IMR-90 (cell line): ENCODE measurements at regions of chr12 and their contacts with region 1.

Region 1: GRCh38 chr12:108856428-108857157 is 790 bp downstream of the SSH1 start:
- DNase-seq: peak; percentile 87
- ATAC-seq: peak; percentile 12
- H3K4me3 ChIP-seq: peak overlapping the region; percentile 93
- H3K27ac ChIP-seq: peak overlapping the region; percentile 100
- H3K4me1 ChIP-seq: peaks cover 28% of the 10 kb centered on the region
- H3K27me3 ChIP-seq: no peaks in the 10 kb centered on the region
- CTCF ChIP-seq: no peak
- POLR2A ChIP-seq: peak; percentile 97
- RAD21 ChIP-seq: no peak

Region 2: GRCh38 chr12:108371801-108372344 is 484.7 kb before region 1 on chr12:
- CTCF ChIA-PET with region 1: no interaction called
- POLR2A ChIA-PET with region 1: no interaction called
- dilution Hi-C with region 1: no loop called
- in situ Hi-C with region 1: no loop called
- intact Hi-C with region 1: no loop called
- DNase-seq: peak; percentile 47
- ATAC-seq: peak; percentile 44; the same call in 1 of the 2 replicates
- H3K4me3 ChIP-seq: no peak overlapping the region
- H3K27ac ChIP-seq: no peak overlapping the region
- H3K4me1 ChIP-seq: no peaks in the 10 kb centered on the region
- H3K27me3 ChIP-seq: no peaks in the 10 kb centered on the region
- CTCF ChIP-seq: no peak
- POLR2A ChIP-seq: no peak
- RAD21 ChIP-seq: no peak

Region 3: DNA sequence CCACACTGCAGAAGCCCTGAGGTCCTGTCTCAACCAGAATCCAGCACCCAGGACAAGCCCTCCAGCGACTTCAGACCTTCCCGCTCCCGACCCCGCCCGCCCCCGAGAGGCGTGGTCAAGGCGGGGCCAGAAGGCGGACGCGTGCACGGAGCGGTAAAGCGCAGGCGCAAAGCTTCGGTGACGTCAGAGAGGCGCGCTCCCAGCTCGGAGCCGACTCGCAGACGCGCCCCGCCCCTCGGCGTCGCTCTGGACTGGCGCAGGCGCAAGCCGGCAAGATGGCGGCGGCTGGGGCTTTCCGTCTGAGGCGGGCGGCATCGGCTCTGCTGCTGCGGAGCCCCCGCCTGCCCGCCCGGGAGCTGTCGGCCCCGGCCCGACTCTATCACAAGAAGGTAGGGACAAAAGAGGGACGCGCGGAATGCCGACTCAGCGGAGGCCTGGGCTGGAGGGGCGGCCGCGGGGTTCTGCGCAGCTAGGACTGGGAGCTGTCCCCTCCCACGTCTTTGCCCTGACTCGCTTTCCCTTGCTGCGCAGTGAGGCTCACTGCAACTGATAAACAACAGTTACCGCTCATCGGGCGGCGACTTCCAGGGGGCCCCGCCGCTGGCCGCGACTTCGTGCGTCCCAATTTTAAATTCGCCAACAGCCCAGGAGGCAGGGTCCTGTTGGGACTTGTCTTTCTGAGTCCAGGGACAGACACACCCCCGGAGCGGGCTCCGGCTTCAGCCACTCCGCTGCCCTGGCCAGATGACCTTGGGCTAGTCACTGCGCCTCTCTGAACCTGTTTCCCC is 294.1 kb before region 1 on chr12 and contains the start of gene ISCU:
- CTCF ChIA-PET with region 1: no interaction called
- POLR2A ChIA-PET with region 1: no interaction called
- dilution Hi-C with region 1: no loop called
- in situ Hi-C with region 1: no loop called
- intact Hi-C with region 1: loop called (anchors 2 kb)
- DNase-seq: peak; percentile 95
- ATAC-seq: peak; percentile 86
- H3K4me3 ChIP-seq: peak within 1 kb of the TSS; percentile 92
- H3K27ac ChIP-seq: peak within 1 kb of the TSS; percentile 89
- H3K4me1 ChIP-seq: no peaks in the 10 kb centered on the region
- H3K27me3 ChIP-seq: no peaks in the 10 kb centered on the region
- CTCF ChIP-seq: no peak
- POLR2A ChIP-seq: peak; percentile 88
- RAD21 ChIP-seq: no peak
- total RNA-seq, gene ISCU: 52.7 and 58.3 TPM in 2 replicates

Region 4: GRCh38 chr12:108664338-108665258 is 192.0 kb before region 1 on chr12:
- CTCF ChIA-PET with region 1: interaction called, 3 read pairs
- POLR2A ChIA-PET with region 1: no interaction called
- dilution Hi-C with region 1: no loop called
- in situ Hi-C with region 1: no loop called
- intact Hi-C with region 1: loop called (anchors 1 kb)
- DNase-seq: peak; percentile 95
- ATAC-seq: peak; percentile 92
- H3K4me3 ChIP-seq: no peak overlapping the region
- H3K27ac ChIP-seq: peak overlapping the region; percentile 85
- H3K4me1 ChIP-seq: peaks cover 30% of the 10 kb centered on the region
- H3K27me3 ChIP-seq: no peaks in the 10 kb centered on the region
- CTCF ChIP-seq: peak; percentile 98
- POLR2A ChIP-seq: peak; percentile 31; the same call in 1 of the 2 replicates
- RAD21 ChIP-seq: peak; percentile 99

Region 5: GRCh38 chr12:108722992-108723766 is 133.4 kb before region 1 on chr12:
- CTCF ChIA-PET with region 1: no interaction called
- POLR2A ChIA-PET with region 1: interaction called, 4 read pairs
- dilution Hi-C with region 1: no loop called
- in situ Hi-C with region 1: loop called (anchors 10 kb)
- intact Hi-C with region 1: loop called (anchors 2 kb)
- DNase-seq: peak; percentile 95
- ATAC-seq: peak; percentile 61
- H3K4me3 ChIP-seq: peak overlapping the region; percentile 2; the same call in 1 of the 2 replicates
- H3K27ac ChIP-seq: peak overlapping the region; percentile 98
- H3K4me1 ChIP-seq: peaks cover 36% of the 10 kb centered on the region
- H3K27me3 ChIP-seq: no peaks in the 10 kb centered on the region
- CTCF ChIP-seq: no peak
- POLR2A ChIP-seq: peak; percentile 54; the same call in 1 of the 2 replicates
- RAD21 ChIP-seq: no peak

Region 6: GRCh38 chr12:108793756-108794441 is 62.7 kb before region 1 on chr12:
- CTCF ChIA-PET with region 1: no interaction called
- POLR2A ChIA-PET with region 1: no interaction called
- dilution Hi-C with region 1: no loop called
- in situ Hi-C with region 1: no loop called
- intact Hi-C with region 1: no loop called
- DNase-seq: no peak
- ATAC-seq: peak; percentile 7; the same call in 1 of the 2 replicates
- H3K4me3 ChIP-seq: no peak overlapping the region
- H3K27ac ChIP-seq: peak overlapping the region; percentile 4; the same call in 1 of the 2 replicates
- H3K4me1 ChIP-seq: peaks cover 13% of the 10 kb centered on the region
- H3K27me3 ChIP-seq: no peaks in the 10 kb centered on the region
- CTCF ChIP-seq: no peak
- POLR2A ChIP-seq: no peak
- RAD21 ChIP-seq: no peak

Region 7: GRCh38 chr12:108833355-108833733 is 23.2 kb before region 1 on chr12:
- CTCF ChIA-PET with region 1: interaction called, 13 read pairs
- POLR2A ChIA-PET with region 1: interaction called, 7 read pairs
- dilution Hi-C with region 1: no loop called
- in situ Hi-C with region 1: no loop called
- intact Hi-C with region 1: loop called (anchors 1 kb)
- DNase-seq: peak; percentile 90
- ATAC-seq: peak; percentile 67
- H3K4me3 ChIP-seq: no peak overlapping the region
- H3K27ac ChIP-seq: peak overlapping the region; percentile 98
- H3K4me1 ChIP-seq: peaks cover 44% of the 10 kb centered on the region
- H3K27me3 ChIP-seq: no peaks in the 10 kb centered on the region
- CTCF ChIP-seq: no peak
- POLR2A ChIP-seq: peak; percentile 60
- RAD21 ChIP-seq: no peak

Region 8: DNA sequence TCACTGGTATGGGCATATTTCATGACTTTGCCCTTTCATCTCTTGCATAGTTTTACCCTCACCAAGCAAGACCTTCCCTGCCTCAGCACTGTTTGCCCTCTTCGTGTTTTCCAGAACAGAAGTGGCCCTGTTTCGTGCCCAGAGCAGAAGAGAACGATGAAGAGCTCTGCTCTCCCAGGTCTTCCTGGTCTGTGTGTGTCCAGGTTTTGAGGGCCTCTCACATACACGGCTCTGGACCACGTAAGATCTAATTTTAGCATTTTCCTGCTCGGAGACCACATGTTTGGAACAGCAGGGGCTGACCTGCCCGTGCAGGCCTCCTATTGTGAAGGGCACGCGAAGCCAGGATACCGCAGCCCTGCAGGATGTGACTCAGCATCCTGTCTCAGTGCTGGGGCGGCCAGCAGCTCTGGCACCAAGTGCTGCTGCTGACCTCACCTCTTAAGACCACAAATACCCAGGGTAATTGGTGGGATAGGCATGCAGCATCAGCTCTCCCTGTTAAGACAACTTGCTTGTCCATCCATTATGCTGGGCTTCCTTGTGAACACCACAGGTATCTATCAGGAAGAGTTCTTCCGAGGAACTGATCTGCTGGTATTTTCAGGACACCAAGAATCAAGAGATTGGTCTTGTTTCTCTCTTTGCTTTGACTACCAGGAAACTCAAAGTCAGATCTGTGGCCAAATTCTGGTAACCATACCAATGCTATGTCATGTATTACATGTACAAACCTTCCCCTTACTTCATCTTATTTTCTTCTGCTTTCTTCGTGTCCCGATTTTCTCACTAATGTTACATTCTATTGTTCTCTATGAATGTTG is 18.2 kb before region 1 on chr12:
- CTCF ChIA-PET with region 1: interaction called, 13 read pairs
- POLR2A ChIA-PET with region 1: interaction called, 3 read pairs
- dilution Hi-C with region 1: no loop called
- in situ Hi-C with region 1: no loop called
- intact Hi-C with region 1: loop called (anchors 1 kb)
- DNase-seq: peak; percentile 100
- ATAC-seq: peak; percentile 78
- H3K4me3 ChIP-seq: no peak overlapping the region
- H3K27ac ChIP-seq: peak overlapping the region; percentile 99
- H3K4me1 ChIP-seq: peaks cover 48% of the 10 kb centered on the region
- H3K27me3 ChIP-seq: no peaks in the 10 kb centered on the region
- CTCF ChIP-seq: no peak
- POLR2A ChIP-seq: peak; percentile 94; the same call in 1 of the 2 replicates
- RAD21 ChIP-seq: peak; percentile 20

Region 9: DNA sequence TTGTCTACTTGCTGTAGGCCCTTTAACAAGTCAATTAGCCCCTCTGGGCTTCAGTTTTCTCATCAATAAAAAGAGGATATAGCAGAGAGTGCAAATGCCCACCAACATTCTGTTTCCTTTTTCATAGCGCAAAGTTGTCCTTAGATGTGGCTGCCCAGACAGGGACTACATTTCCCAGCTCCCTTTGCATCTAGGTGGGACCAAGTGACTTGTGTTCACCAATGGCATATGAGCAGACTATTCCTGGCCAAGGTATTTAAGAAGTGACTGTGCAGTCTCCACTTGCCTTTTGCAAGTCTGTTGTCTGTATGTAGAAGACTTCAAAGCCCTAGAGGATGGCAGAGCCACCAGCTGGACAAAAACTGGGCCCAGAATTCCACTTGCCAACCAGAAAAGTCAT is 83.0 kb after region 1 on chr12:
- CTCF ChIA-PET with region 1: no interaction called
- POLR2A ChIA-PET with region 1: no interaction called
- dilution Hi-C with region 1: no loop called
- in situ Hi-C with region 1: no loop called
- intact Hi-C with region 1: no loop called
- DNase-seq: peak; percentile 13
- ATAC-seq: no peak
- H3K4me3 ChIP-seq: no peak overlapping the region
- H3K27ac ChIP-seq: no peak overlapping the region
- H3K4me1 ChIP-seq: no peaks in the 10 kb centered on the region
- H3K27me3 ChIP-seq: peaks cover 32% of the 10 kb centered on the region
- CTCF ChIP-seq: no peak
- POLR2A ChIP-seq: no peak
- RAD21 ChIP-seq: no peak

Region 10: GRCh38 chr12:108950991-108951739 is 94.6 kb after region 1 on chr12:
- CTCF ChIA-PET with region 1: interaction called, 3 read pairs
- POLR2A ChIA-PET with region 1: no interaction called
- dilution Hi-C with region 1: no loop called
- in situ Hi-C with region 1: no loop called
- intact Hi-C with region 1: loop called (anchors 2 kb)
- DNase-seq: peak; percentile 54
- ATAC-seq: peak; percentile 37
- H3K4me3 ChIP-seq: no peak overlapping the region
- H3K27ac ChIP-seq: no peak overlapping the region
- H3K4me1 ChIP-seq: 0 out of 2 replicates have a peak, but pooled peaks cover 1% of the 10 kb centered on the region
- H3K27me3 ChIP-seq: peaks cover 6% of the 10 kb centered on the region
- CTCF ChIP-seq: peak; percentile 78
- POLR2A ChIP-seq: no peak
- RAD21 ChIP-seq: peak; percentile 85

Region 11: GRCh38 chr12:109027767-109028166 is 171.2 kb after region 1 on chr12:
- CTCF ChIA-PET with region 1: no interaction called
- POLR2A ChIA-PET with region 1: no interaction called
- dilution Hi-C with region 1: no loop called
- in situ Hi-C with region 1: no loop called
- intact Hi-C with region 1: no loop called
- DNase-seq: peak; percentile 64
- ATAC-seq: peak; percentile 82
- H3K4me3 ChIP-seq: no peak overlapping the region
- H3K27ac ChIP-seq: no peak overlapping the region
- H3K4me1 ChIP-seq: no peaks in the 10 kb centered on the region; the same call in 1 of the 2 replicates
- H3K27me3 ChIP-seq: peaks cover 2% of the 10 kb centered on the region; the same call in 1 of the 2 replicates
- CTCF ChIP-seq: no peak
- POLR2A ChIP-seq: no peak
- RAD21 ChIP-seq: no peak